Heart left ventricle (tissue), 16 donors: ENCODE measurements at regions of chr9 and their contacts with region 1.

Region 1: DNA sequence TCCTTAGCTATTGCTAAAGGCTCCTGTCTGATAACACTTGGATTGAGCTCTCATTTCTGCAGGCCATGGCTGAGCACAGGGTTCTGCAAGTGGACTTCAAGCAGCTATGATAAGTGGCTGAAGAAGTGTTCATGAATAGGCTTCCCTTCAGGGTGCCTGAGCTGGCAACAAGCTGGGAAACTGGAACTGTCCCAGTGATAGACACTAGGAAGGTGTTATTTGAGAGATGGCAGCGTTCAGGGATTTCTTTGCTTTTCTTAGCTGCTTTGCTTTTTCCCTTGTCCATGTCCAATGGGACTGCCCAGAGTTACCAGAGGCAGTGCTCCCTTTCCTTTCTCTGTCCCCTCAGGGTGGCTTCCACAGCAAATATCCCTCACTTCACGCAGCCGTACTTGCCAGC is 75.8 kb downstream of the INIP start:
- DNase-seq: peak in 2 of 5 donors; percentile 36 to 47
- ATAC-seq: peak; percentile 49 to 96 (median 72)
- H3K4me3 ChIP-seq: no peak overlapping the region
- H3K27ac ChIP-seq: no peak overlapping the region
- H3K4me1 ChIP-seq: peaks cover 0 to 8% (median 0%) of the 10 kb centered on the region in 12 donors
- H3K27me3 ChIP-seq: no peaks in the 10 kb centered on the region
- CTCF ChIP-seq: no peak
- POLR2A ChIP-seq: no peak

Region 2: GRCh38 chr9:112486221-112487007 is 155.7 kb before region 1 on chr9 and contains the start of gene KIAA1958:
- intact Hi-C with region 1: loop called in 1 of 10 experiments (anchors 5 kb)
- DNase-seq: peak; percentile 72 to 91 (median 89)
- ATAC-seq: peak; percentile 77 to 94 (median 93)
- H3K4me3 ChIP-seq: peak within 1 kb of the TSS; percentile 53 to 96 (median 84)
- H3K27ac ChIP-seq: peak within 1 kb of the TSS; percentile 29 to 87 (median 70)
- H3K4me1 ChIP-seq: peaks cover 0 to 23% (median 8%) of the 10 kb centered on the region in 12 donors
- H3K27me3 ChIP-seq: no peaks in the 10 kb centered on the region
- CTCF ChIP-seq: no peak
- POLR2A ChIP-seq: peak in 1 of 2 donors; percentile 36
- total RNA-seq, gene KIAA1958: 3.1 to 8.5 (median 6.0) TPM

Region 3: GRCh38 chr9:112569186-112569585 is 72.9 kb before region 1 on chr9:
- intact Hi-C with region 1: no loop called
- DNase-seq: no peak
- ATAC-seq: no peak
- H3K4me3 ChIP-seq: no peak overlapping the region
- H3K27ac ChIP-seq: no peak overlapping the region
- H3K4me1 ChIP-seq: peaks cover 0 to 12% (median 0%) of the 10 kb centered on the region in 12 donors
- H3K27me3 ChIP-seq: no peaks in the 10 kb centered on the region
- CTCF ChIP-seq: no peak
- POLR2A ChIP-seq: no peak

Region 4: GRCh38 chr9:112670991-112671625 is 29.0 kb after region 1 on chr9:
- intact Hi-C with region 1: no loop called
- DNase-seq: no peak
- ATAC-seq: no peak
- H3K4me3 ChIP-seq: no peak overlapping the region
- H3K27ac ChIP-seq: no peak overlapping the region
- H3K4me1 ChIP-seq: no peaks in the 10 kb centered on the region
- H3K27me3 ChIP-seq: no peaks in the 10 kb centered on the region
- CTCF ChIP-seq: no peak
- POLR2A ChIP-seq: no peak

Region 5: DNA sequence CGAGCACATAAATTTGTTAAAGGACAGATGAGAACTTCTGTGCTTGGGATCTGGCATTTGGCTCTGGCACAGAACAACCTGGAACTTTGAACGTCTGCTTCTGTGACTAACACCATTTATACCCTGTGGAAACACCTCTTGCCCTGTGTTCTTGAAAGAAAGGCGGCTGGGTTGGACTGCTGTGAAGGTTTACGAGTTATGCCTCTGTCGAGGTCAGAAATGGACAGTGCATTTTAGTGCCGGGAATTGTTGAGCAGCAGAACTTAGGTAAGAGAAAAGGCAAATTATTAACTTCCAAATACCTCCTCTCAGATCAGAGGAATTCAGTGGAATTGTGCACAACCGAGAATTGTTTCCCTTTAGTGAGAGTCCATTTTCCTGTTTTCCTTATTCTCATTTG is 89.8 kb after region 1 on chr9:
- intact Hi-C with region 1: no loop called
- DNase-seq: no peak
- ATAC-seq: no peak
- H3K4me3 ChIP-seq: no peak overlapping the region
- H3K27ac ChIP-seq: no peak overlapping the region
- H3K4me1 ChIP-seq: peaks cover 0 to 10% (median 0%) of the 10 kb centered on the region in 12 donors
- H3K27me3 ChIP-seq: no peaks in the 10 kb centered on the region
- CTCF ChIP-seq: no peak
- POLR2A ChIP-seq: no peak

Region 6: DNA sequence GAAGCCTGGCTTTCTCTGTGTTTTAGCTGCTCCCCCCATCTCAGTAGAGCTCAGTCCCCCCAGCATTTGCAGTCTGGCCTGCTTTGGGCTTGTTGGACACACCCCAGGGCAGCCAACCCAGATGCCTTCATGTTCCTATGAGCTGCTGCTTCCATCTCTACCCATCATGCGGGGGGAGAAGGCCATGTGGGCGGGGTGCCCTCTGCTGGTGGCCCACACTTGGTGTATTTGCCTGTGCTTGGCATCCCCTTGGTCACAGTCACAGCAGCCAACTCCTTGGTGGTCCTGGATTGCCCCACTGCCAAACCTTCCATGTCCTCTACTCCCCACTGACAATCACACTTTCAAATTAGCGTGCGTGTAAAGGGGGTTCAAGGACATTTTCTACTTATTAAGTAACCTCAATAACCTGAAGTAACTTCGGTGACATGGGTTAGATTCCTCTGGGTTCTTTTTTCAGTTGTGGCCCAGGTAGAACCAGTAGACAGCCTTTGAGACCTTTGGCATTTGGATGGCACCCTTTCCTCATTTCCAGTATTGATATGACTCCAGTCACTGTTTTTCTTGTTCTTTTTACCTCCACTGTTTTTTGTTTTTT is 151.2 kb after region 1 on chr9:
- intact Hi-C with region 1: no loop called
- DNase-seq: peak; percentile 40 to 83 (median 59)
- ATAC-seq: peak in 3 of 4 donors; percentile 77 to 84 (median 83)
- H3K4me3 ChIP-seq: no peak overlapping the region
- H3K27ac ChIP-seq: no peak overlapping the region
- H3K4me1 ChIP-seq: peaks cover 0 to 8% (median 0%) of the 10 kb centered on the region in 12 donors
- H3K27me3 ChIP-seq: no peaks in the 10 kb centered on the region
- CTCF ChIP-seq: peak; percentile 36 to 65 (median 52)
- POLR2A ChIP-seq: no peak